Caco-2 (cell line): ENCODE measurements at regions of chr11 and their contacts with region 1.

Region 1: DNA sequence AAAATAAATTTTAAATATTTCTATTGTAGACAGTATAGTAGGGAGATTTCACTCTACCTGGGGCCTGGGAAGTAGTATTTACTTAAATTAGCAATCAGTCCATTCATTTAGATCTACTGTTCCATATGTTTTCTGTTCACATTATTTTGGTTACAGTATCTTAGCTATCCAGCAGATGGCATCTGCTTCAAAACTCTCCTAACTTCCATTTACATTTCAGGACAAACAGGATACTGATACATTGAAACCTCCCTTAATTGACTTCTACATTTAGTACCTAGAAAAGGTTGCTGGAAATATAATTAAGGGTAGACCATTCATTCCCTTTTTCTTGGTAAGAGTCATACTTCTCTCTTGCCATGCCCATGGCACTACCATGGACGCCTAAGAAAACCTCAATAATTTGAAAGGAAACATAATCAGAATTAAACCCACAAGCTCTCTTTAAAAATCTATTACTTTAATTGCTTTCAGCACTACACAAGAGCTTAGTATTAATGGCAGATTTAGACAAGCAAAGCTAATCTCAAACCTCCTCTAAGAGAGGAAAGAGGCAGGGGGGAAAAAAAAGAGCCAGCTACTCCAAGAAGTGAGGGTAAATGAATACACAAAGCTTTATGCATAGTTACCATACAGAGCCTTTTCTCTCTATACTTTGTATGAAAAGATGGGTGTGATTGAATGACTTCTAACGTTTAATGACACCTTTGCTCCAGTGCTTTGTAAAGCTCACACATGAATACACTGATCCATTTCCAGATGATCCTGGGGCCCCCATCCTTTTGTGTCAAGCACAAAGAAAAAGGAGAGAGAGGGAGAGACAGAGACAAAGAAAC is 131.2 kb upstream of the MTMR2 start:
- DNase-seq: peak in 1 of 2 experiments; percentile 48
- H3K4me3 ChIP-seq: no peak overlapping the region
- H3K4me3 Mint-ChIP-seq: no peak overlapping the region
- H3K27ac Mint-ChIP-seq: no peak overlapping the region
- H3K4me1 ChIP-seq: peaks cover 44% of the 10 kb centered on the region
- H3K4me1 Mint-ChIP-seq: peaks cover 43% of the 10 kb centered on the region
- H3K27me3 ChIP-seq: no peaks in the 10 kb centered on the region
- H3K27me3 Mint-ChIP-seq: no peaks in the 10 kb centered on the region
- CTCF ChIP-seq: peak; percentile 77 to 81

Region 2: DNA sequence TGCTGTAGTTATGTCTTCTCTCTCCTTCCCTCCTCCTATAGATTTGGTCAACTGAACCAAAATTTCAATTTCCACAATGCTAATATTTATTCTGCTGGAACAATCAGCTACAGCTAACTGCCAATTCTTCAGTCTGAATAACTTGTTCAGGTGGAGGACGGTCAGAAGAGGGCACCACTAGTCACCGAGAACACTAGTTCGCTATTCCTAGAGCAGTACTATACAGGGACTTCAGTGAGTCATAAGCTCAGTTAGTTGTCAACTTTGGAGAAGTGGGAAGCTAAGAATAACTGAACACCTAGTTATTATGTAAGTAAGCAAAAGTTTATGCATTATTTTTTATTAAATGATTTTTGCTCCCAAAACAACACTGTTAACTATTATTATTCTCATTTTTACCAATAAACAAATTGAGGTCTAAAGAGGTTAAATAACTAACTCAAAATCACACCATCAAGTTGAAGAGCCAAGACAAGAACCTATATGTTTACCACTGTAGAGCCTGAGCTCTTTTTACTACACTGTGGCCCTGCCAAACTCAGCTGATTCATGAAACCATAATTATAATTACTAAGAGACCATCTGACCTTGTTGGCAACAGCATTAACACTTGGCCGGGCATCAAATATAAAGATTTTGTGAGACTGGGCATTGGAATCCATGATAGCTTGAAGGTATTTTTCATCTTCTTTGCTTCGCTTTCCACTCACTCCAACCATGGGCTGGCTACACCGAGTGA is 205.8 kb before region 1 on chr11:
- CTCF ChIA-PET with region 1: interaction called, 21 read pairs
- POLR2A ChIA-PET with region 1: no interaction called
- intact Hi-C with region 1: loop called (anchors 1 kb)
- DNase-seq: peak; percentile 75 to 81
- H3K4me3 ChIP-seq: no peak overlapping the region
- H3K4me3 Mint-ChIP-seq: no peak overlapping the region
- H3K27ac Mint-ChIP-seq: no peak overlapping the region
- H3K4me1 ChIP-seq: no peaks in the 10 kb centered on the region
- H3K4me1 Mint-ChIP-seq: no peaks in the 10 kb centered on the region
- H3K27me3 ChIP-seq: no peaks in the 10 kb centered on the region
- H3K27me3 Mint-ChIP-seq: no peaks in the 10 kb centered on the region
- CTCF ChIP-seq: peak; percentile 71 to 85

Region 3: DNA sequence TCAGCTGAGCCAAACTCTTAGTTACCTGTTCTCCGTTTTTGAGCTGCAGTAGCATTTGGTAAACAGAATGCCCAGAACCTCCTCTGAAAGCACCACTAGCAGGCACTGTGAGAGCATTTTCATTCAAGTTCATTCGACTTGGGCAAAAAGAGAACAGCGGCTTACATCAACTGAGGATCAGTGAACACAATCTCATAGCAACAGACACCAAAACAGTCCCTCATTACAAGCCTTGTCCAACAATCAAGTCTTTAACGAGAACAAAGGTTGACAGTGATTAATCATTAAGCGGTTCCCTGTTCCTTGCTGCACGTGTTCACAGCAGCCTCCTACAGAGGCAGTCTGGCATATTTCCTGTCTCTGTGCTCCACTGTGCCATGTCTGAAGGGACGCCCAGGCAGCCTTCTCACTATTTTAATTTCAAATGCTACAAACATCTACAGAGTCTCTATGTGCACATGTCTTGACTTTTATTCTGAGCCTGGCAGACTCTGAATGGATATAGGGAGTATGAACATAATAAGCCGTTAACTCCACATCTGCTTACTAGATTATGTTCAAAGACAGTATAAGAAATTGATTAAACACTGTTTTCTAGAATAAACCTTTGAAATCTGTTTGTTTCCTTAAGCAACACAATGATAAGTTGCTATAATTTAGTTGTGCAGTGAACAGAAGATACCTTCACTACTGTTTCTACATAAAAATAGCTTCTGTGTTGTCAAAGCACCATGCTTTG is 42.8 kb before region 1 on chr11:
- CTCF ChIA-PET with region 1: interaction called, 3 read pairs
- POLR2A ChIA-PET with region 1: no interaction called
- intact Hi-C with region 1: loop called (anchors 1 kb)
- DNase-seq: peak; percentile 62 to 69
- H3K4me3 ChIP-seq: no peak overlapping the region
- H3K4me3 Mint-ChIP-seq: no peak overlapping the region
- H3K27ac Mint-ChIP-seq: no peak overlapping the region
- H3K4me1 ChIP-seq: peaks cover 32% of the 10 kb centered on the region
- H3K4me1 Mint-ChIP-seq: peaks cover 14% of the 10 kb centered on the region
- H3K27me3 ChIP-seq: no peaks in the 10 kb centered on the region
- H3K27me3 Mint-ChIP-seq: no peaks in the 10 kb centered on the region
- CTCF ChIP-seq: peak; percentile 38 to 70

Region 4: GRCh38 chr11:96074551-96075310 is 19.6 kb after region 1 on chr11:
- CTCF ChIA-PET with region 1: no interaction called
- POLR2A ChIA-PET with region 1: no interaction called
- intact Hi-C with region 1: no loop called
- DNase-seq: no peak
- H3K4me3 ChIP-seq: no peak overlapping the region
- H3K4me3 Mint-ChIP-seq: no peak overlapping the region
- H3K27ac Mint-ChIP-seq: no peak overlapping the region
- H3K4me1 ChIP-seq: peaks cover 8% of the 10 kb centered on the region
- H3K4me1 Mint-ChIP-seq: no peaks in the 10 kb centered on the region
- H3K27me3 ChIP-seq: no peaks in the 10 kb centered on the region
- H3K27me3 Mint-ChIP-seq: no peaks in the 10 kb centered on the region
- CTCF ChIP-seq: no peak

Region 5: GRCh38 chr11:96155627-96156378 is 100.7 kb after region 1 on chr11:
- CTCF ChIA-PET with region 1: interaction called, 27 read pairs
- POLR2A ChIA-PET with region 1: no interaction called
- intact Hi-C with region 1: loop called (anchors 1 kb)
- DNase-seq: peak; percentile 79 to 82
- H3K4me3 ChIP-seq: no peak overlapping the region
- H3K4me3 Mint-ChIP-seq: no peak overlapping the region
- H3K27ac Mint-ChIP-seq: peak overlapping the region; percentile 77
- H3K4me1 ChIP-seq: peaks cover 35% of the 10 kb centered on the region
- H3K4me1 Mint-ChIP-seq: peaks cover 17% of the 10 kb centered on the region
- H3K27me3 ChIP-seq: no peaks in the 10 kb centered on the region
- H3K27me3 Mint-ChIP-seq: no peaks in the 10 kb centered on the region
- CTCF ChIP-seq: peak in 1 of 2 experiments; percentile 40

Region 6: GRCh38 chr11:96219981-96220623 is 165.0 kb after region 1 on chr11:
- CTCF ChIA-PET with region 1: no interaction called
- POLR2A ChIA-PET with region 1: no interaction called
- intact Hi-C with region 1: loop called (anchors 1 kb)
- DNase-seq: peak; percentile 65 to 67
- H3K4me3 ChIP-seq: no peak overlapping the region
- H3K4me3 Mint-ChIP-seq: peak overlapping the region; percentile 45
- H3K27ac Mint-ChIP-seq: peak overlapping the region; percentile 81
- H3K4me1 ChIP-seq: peaks cover 47% of the 10 kb centered on the region
- H3K4me1 Mint-ChIP-seq: peaks cover 46% of the 10 kb centered on the region
- H3K27me3 ChIP-seq: no peaks in the 10 kb centered on the region
- H3K27me3 Mint-ChIP-seq: no peaks in the 10 kb centered on the region
- CTCF ChIP-seq: no peak

Region 7: GRCh38 chr11:96389720-96390487 is 334.8 kb after region 1 on chr11 and contains the starts of genes CCDC82 and JRKL:
- CTCF ChIA-PET with region 1: interaction called, 7 read pairs
- POLR2A ChIA-PET with region 1: interaction called, 6 read pairs
- intact Hi-C with region 1: loop called (anchors 1 kb)
- DNase-seq: peak; percentile 99 to 100
- H3K4me3 ChIP-seq: peak within 1 kb of the TSS; percentile 82
- H3K4me3 Mint-ChIP-seq: peak within 1 kb of the TSS; percentile 82
- H3K27ac Mint-ChIP-seq: peak within 1 kb of the TSS; percentile 88
- H3K4me1 ChIP-seq: peaks cover 28% of the 10 kb centered on the region
- H3K4me1 Mint-ChIP-seq: peaks cover 19% of the 10 kb centered on the region
- H3K27me3 ChIP-seq: no peaks in the 10 kb centered on the region
- H3K27me3 Mint-ChIP-seq: no peaks in the 10 kb centered on the region
- CTCF ChIP-seq: no peak
- total RNA-seq, gene CCDC82: 38.2 TPM in 2 replicates
- total RNA-seq, gene JRKL: 16.6 and 17.4 TPM in 2 replicates